SK-N-SH (cell line): ENCODE measurements at regions of chr1 and their contacts with region 1.

Region 1: GRCh38 chr1:156689035-156689952 is 12.1 kb upstream of the NES start:
- DNase-seq: peak; percentile 85
- H3K4me3 ChIP-seq: peak overlapping the region; percentile 39 to 51
- H3K27ac ChIP-seq: peak overlapping the region in 1 of 2 experiments; percentile 86; a peak in 2 of 4 replicates
- H3K4me1 ChIP-seq: peaks cover 13 to 52% of the 10 kb centered on the region in 2 experiments; a peak in 3 of 4 replicates
- H3K27me3 ChIP-seq: no peaks in the 10 kb centered on the region
- CTCF ChIP-seq: peak; percentile 74
- EP300 ChIP-seq: no peak
- RAD21 ChIP-seq: peak; percentile 99

Region 2: GRCh38 chr1:156618853-156619581 is 70.3 kb before region 1 on chr1 and contains the start of gene HAPLN2:
- CTCF ChIA-PET with region 1: interaction called, 237 read pairs
- POLR2A ChIA-PET with region 1: no interaction called
- DNase-seq: no peak
- H3K4me3 ChIP-seq: no peak within 1 kb of the TSS
- H3K27ac ChIP-seq: no peak within 1 kb of the TSS
- H3K4me1 ChIP-seq: peaks cover 0 to 13% of the 10 kb centered on the region in 2 experiments; a peak in 3 of 4 replicates
- H3K27me3 ChIP-seq: peaks cover 14% of the 10 kb centered on the region
- CTCF ChIP-seq: peak; percentile 55
- EP300 ChIP-seq: no peak
- RAD21 ChIP-seq: peak; percentile 38
- polyA plus RNA-seq, gene HAPLN2: 0.10 and 0.20 TPM in 2 replicates

Region 3: GRCh38 chr1:156667610-156667967 is 21.7 kb before region 1 on chr1:
- CTCF ChIA-PET with region 1: interaction called, 682 read pairs
- POLR2A ChIA-PET with region 1: no interaction called
- DNase-seq: no peak
- H3K4me3 ChIP-seq: no peak overlapping the region
- H3K27ac ChIP-seq: peak overlapping the region; percentile 11 to 75; a peak in 2 of 4 replicates
- H3K4me1 ChIP-seq: peaks cover 19 to 44% of the 10 kb centered on the region in 2 experiments; a peak in 3 of 4 replicates
- H3K27me3 ChIP-seq: no peaks in the 10 kb centered on the region
- CTCF ChIP-seq: no peak
- EP300 ChIP-seq: no peak
- RAD21 ChIP-seq: no peak

Region 4: DNA sequence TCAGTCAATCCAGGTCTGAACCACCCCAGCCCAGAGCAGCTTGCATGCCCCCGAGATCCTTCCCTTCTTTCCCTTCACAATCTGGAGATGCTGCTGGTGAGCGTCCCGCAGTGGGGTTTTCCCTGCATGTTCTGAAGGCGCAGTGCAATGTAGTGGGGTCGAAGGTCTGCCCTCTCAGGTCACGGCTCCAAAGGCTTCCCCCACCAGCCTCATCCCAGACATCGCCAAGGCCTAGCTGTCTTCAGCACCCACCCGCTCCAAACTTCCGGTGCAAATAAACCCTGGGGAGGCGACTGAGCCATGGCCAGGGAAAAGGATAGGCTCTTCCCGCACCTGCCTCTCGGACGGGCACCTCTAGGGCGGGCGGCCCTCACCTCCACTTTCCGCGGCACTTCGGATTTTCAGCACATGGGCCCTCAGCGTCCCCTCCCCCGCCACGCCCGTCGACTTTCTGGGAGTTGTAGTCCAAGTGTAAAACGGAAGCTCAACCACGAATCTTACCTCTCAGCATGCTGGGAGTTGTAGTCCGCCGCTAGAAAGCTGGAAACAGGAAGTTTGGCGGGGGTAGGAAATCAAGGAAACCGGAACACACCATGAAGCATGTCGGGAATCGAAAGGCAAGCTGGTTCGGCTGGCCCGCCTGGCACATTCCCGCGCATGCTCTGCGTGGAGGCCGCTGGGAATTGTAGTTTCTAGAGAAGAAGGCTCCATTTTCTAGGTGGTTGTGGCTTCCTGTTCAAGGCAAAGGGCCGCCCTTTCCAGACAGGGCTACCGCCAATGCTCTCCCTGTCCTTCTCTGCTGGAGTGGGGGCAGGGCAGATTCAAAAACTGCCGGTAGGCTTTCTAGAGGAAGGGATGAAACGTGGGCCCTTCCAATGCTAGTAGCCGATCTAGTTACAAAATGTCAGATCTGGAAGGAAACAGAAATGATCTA is 51.7 kb after region 1 on chr1 and contains the start of gene MRPL24:
- CTCF ChIA-PET with region 1: interaction called, 42 read pairs
- POLR2A ChIA-PET with region 1: interaction called, 6 read pairs
- DNase-seq: peak; percentile 91
- H3K4me3 ChIP-seq: peak within 1 kb of the TSS; percentile 83 to 94
- H3K27ac ChIP-seq: peak within 1 kb of the TSS; percentile 82 to 92
- H3K4me1 ChIP-seq: peaks cover 9 to 13% of the 10 kb centered on the region in 2 experiments
- H3K27me3 ChIP-seq: no peaks in the 10 kb centered on the region
- CTCF ChIP-seq: no peak
- EP300 ChIP-seq: peak in 1 of 2 experiments; percentile 31; a peak in 2 of 4 replicates
- RAD21 ChIP-seq: no peak; the same call in 1 of the 2 replicates
- polyA plus RNA-seq, gene MRPL24: 149 and 171 TPM in 2 replicates

Region 5: DNA sequence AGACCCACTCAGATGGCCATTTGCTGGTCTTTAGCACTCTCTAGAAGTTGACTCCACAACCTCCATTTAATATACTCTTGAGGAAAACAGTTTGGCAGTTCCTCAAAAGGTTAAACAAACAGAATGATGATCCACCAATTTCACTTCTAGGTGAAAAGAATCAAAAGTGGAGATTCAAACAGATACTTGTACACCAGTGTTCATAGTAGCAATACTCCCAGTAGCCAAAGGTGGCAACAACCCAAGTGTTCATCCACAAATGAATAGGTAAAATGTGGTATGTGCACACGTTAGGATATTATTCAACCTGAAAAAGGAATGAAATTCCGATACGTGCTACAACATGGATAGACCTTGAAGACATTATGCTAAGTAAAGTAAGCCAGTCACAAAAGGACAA is 84.3 kb after region 1 on chr1:
- CTCF ChIA-PET with region 1: interaction called, 21 read pairs
- POLR2A ChIA-PET with region 1: interaction called, 6 read pairs
- DNase-seq: no peak
- H3K4me3 ChIP-seq: no peak overlapping the region
- H3K27ac ChIP-seq: peak overlapping the region; percentile 29 to 93; a peak in 3 of 4 replicates
- H3K4me1 ChIP-seq: peaks cover 27 to 41% of the 10 kb centered on the region in 2 experiments; a peak in 3 of 4 replicates
- H3K27me3 ChIP-seq: no peaks in the 10 kb centered on the region
- CTCF ChIP-seq: peak; percentile 18; the same call in 1 of the 2 replicates
- EP300 ChIP-seq: no peak
- RAD21 ChIP-seq: no peak

Region 6: GRCh38 chr1:156860113-156860627 is 170.9 kb after region 1 on chr1:
- CTCF ChIA-PET with region 1: interaction called, 71 read pairs
- POLR2A ChIA-PET with region 1: interaction called, 7 read pairs
- DNase-seq: peak; percentile 87
- H3K4me3 ChIP-seq: peak overlapping the region; percentile 54 to 64
- H3K27ac ChIP-seq: peak overlapping the region in 1 of 2 experiments; percentile 97; a peak in 2 of 4 replicates
- H3K4me1 ChIP-seq: peaks cover 3 to 74% of the 10 kb centered on the region in 2 experiments; a peak in 2 of 4 replicates
- H3K27me3 ChIP-seq: peaks cover 39% of the 10 kb centered on the region
- CTCF ChIP-seq: peak; percentile 85
- EP300 ChIP-seq: no peak
- RAD21 ChIP-seq: peak; percentile 86